Activated CD4-positive, alpha-beta T cell treated with anti-CD3 and anti-CD28 coated beads, Interleukin-2, amount 10 ng/mL, durations not matched to agents 24 days and 14 days (primary cell): ENCODE measurements at regions of chr1 and their contacts with region 1.

Region 1: GRCh38 chr1:173409613-173410012 is 67.5 kb upstream of the PRDX6 start:
- DNase-seq: no peak
- H3K4me3 Mint-ChIP-seq: no peak overlapping the region
- H3K27ac Mint-ChIP-seq: no peak overlapping the region
- H3K4me1 Mint-ChIP-seq: peaks cover 13% of the 10 kb centered on the region
- H3K27me3 Mint-ChIP-seq: no peaks in the 10 kb centered on the region

Region 2: GRCh38 chr1:173255214-173255813 is 154.3 kb before region 1 on chr1:
- intact Hi-C with region 1: loop called (anchors 10 kb)
- DNase-seq: no peak
- H3K4me3 Mint-ChIP-seq: no peak overlapping the region
- H3K27ac Mint-ChIP-seq: no peak overlapping the region
- H3K4me1 Mint-ChIP-seq: no peaks in the 10 kb centered on the region
- H3K27me3 Mint-ChIP-seq: peaks cover 2% of the 10 kb centered on the region

Region 3: GRCh38 chr1:173554541-173555250 is 145.1 kb after region 1 on chr1:
- intact Hi-C with region 1: no loop called
- DNase-seq: no peak
- H3K4me3 Mint-ChIP-seq: no peak overlapping the region
- H3K27ac Mint-ChIP-seq: no peak overlapping the region
- H3K4me1 Mint-ChIP-seq: peaks cover 38% of the 10 kb centered on the region
- H3K27me3 Mint-ChIP-seq: no peaks in the 10 kb centered on the region